Activated CD4-positive, alpha-beta T cell treated with anti-CD3 and anti-CD28 coated beads for 36 hours (primary cell): ENCODE measurements at regions of chr6 and their contacts with region 1.

Region 1: DNA sequence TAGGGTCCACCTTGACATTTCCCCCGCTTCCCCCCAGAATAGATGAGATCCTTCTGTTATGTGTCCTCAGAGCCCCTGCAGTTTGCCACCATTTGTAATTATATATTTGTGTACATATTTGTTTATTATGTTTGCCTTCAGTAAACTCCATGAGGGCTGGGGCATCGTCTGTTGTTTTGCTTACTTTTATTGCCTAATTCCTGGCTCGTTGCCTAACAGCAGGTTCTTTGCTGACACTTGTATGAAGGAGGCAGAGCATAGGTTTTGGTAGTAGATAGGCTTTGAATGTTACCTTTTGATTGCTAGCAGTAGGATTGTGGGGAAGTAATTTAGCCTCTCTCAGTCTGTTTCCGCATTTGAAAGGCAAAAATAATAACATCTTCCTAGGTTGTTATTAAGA is 9.9 kb downstream of the MAP3K4 start:
- DNase-seq: no peak
- ATAC-seq: no peak
- H3K4me3 Mint-ChIP-seq: no peak overlapping the region
- H3K27ac Mint-ChIP-seq: no peak overlapping the region
- H3K4me1 Mint-ChIP-seq: peaks cover 30% of the 10 kb centered on the region
- H3K27me3 Mint-ChIP-seq: no peaks in the 10 kb centered on the region

Region 2: DNA sequence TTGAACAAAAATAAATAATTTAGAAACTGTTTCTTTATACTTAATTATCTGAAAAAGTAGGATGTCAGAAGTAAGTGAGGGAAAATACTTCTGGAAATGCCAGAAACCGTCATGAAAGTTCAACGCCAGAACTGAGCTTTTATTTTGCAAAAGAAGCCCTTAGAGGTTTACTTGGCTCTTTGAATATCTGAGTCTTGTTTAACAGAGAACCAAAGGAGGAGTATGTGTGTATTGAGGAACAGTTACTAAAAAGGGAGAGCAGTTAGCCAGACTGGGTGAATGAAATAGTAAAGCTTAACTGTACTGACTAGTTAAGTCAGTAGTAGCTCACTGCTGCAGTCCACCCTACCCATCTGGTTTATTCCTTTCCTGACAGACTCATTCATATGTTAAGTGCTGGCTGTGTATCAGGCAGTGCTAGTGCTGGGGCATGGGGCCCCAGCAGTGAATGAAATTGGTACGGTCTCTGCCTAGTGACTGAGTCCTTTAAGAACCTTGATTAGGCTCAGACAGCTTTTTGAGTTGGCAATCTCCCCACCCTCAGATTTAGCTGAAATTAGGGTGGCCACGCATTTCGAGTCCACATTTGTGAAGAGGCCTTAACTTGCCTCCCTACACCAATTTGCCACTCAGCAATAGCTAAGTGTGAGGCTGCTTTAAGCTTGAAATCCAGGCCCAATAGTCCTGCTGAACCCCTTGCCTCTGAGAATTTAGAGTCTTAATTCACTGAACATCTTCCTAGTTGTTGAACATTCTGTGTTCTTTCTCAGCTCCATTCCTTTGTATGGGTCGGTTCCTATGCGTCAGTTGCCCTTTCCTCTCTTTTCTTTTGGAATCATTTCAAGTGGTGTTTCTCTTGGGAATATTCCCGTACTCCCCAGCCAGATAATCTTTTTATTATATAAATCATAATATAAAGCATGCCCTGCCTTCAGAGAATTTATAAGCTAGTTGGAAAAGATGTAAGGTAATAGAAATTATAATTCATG is 10.4 kb after region 1 on chr6:
- CTCF ChIA-PET with region 1: interaction called, 11 read pairs
- POLR2A ChIA-PET with region 1: no interaction called
- intact Hi-C with region 1: no loop called
- DNase-seq: no peak
- ATAC-seq: no peak
- H3K4me3 Mint-ChIP-seq: no peak overlapping the region
- H3K27ac Mint-ChIP-seq: no peak overlapping the region
- H3K4me1 Mint-ChIP-seq: peaks cover 33% of the 10 kb centered on the region
- H3K27me3 Mint-ChIP-seq: no peaks in the 10 kb centered on the region

Region 3: GRCh38 chr6:161101517-161101916 is 100.1 kb after region 1 on chr6:
- CTCF ChIA-PET with region 1: no interaction called
- POLR2A ChIA-PET with region 1: no interaction called
- intact Hi-C with region 1: no loop called
- DNase-seq: no peak
- ATAC-seq: no peak
- H3K4me3 Mint-ChIP-seq: no peak overlapping the region
- H3K27ac Mint-ChIP-seq: no peak overlapping the region
- H3K4me1 Mint-ChIP-seq: peaks cover 10% of the 10 kb centered on the region
- H3K27me3 Mint-ChIP-seq: no peaks in the 10 kb centered on the region